Dendritic cell treated with granulocyte-macrophage colony-stimulating factor and Interleukin-4, amounts not matched to agents 40 ng/mL and 50 ng/mL, for 4 days (primary cell): ENCODE measurements at regions of chr1 and their contacts with region 1.

Region 1: DNA sequence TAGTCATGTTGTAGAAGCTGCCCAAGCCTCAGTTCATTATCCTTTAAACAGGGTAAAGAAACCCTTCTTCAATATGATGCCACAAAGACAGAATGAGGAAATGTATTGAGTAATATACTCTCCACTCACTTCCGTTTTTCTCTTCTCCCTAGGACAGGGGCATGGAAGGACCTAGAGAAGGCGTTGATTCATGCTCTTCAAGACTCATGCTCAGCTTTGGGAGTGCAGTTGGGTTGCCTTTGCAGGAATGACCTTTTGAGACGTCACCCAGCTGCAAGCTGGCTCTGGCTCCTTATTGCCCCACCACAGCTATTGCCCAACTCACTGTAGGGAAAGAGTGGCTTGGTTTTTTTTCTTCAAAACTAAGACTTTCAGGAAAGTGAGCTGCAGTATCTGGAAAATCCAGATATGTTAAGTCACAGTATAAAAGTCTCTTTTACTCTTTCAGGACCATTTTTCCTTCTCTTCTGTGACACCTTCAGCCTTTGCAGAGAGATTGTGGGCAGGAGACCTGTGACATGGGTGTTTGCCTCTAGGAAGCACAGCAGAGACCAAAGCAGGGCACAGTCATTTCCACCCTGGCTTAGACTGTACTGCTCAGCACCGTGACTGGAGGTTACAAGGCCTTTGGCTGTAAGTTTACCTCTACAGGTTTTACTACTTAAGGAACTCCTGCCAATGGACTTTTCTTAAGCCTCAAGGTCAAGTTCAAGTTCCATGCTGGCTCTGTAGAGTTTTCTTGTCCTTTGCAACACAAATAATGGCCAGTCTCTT is 39.5 kb downstream of the XCL2 start:
- H3K4me3 Mint-ChIP-seq: no peak overlapping the region
- H3K27ac Mint-ChIP-seq: peak overlapping the region; percentile 53
- H3K4me1 Mint-ChIP-seq: peaks cover 51% of the 10 kb centered on the region
- H3K27me3 Mint-ChIP-seq: no peaks in the 10 kb centered on the region

Region 2: GRCh38 chr1:168408536-168409242 is 95.6 kb before region 1 on chr1:
- intact Hi-C with region 1: no loop called
- H3K4me3 Mint-ChIP-seq: no peak overlapping the region
- H3K27ac Mint-ChIP-seq: no peak overlapping the region
- H3K4me1 Mint-ChIP-seq: no peaks in the 10 kb centered on the region
- H3K27me3 Mint-ChIP-seq: no peaks in the 10 kb centered on the region

Region 3: DNA sequence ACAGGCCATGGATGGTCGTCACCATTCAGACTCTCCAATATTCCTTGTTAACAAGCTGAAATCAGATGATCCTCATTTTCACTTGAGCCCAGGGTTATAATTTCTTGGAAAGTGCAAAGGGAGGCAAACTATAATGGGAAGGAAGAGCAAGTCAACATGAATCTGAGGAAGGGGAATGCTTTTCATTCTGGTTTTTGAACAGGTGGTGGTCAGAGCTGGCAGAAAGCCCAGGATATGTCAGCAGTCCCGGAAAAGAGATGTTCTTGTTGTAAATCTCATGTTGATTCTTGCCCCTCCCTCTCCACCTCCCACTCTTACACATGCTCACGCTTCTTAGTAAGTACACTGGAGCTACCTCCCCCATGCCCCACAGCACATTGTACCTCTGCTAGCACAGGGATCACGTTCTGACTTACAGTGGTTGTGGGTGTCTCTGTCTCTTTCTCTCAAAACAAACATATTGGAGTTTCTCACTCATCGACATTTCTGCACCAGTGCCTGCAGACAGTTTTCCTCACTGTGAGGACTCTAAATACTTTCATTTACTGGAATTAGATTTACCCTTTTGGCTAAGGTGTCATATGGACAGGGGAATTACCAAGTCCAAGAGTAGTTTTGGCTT is 38.0 kb before region 1 on chr1:
- intact Hi-C with region 1: loop called (anchors 5 kb)
- H3K4me3 Mint-ChIP-seq: no peak overlapping the region
- H3K27ac Mint-ChIP-seq: peak overlapping the region; percentile 72
- H3K4me1 Mint-ChIP-seq: peaks cover 34% of the 10 kb centered on the region
- H3K27me3 Mint-ChIP-seq: no peaks in the 10 kb centered on the region

Region 4: DNA sequence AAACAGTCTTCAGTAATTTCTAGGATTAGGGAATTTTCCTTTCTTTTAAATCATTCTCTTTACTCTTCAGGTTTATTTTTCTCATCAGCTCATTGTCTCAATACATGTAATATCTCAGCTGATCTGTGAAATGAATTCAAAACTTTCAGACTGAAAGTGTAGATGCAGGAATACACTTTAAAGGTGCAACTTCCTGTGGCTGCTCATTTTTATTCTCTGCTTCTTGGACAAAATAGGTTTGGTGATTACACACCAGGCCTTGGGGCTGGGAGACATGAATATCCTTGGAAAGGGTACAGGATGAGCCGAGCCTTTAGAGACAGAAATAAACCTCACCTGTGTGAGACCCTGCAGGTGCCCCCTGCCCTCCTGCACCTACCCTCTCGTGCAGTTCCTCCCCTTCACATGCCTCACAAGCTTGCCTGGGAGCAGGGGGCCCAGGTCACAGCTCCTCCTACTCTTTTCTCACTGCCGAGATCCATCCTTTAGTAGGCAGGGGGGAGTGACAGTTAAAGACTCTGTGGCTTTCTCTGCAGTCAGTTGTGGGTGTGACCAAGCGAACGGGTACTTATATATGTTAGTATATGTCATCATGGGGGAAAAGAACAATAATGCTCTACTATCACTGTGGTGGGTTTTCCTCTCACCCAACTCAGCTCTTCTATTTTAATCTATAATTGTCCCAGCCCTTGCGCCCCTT is 16.0 kb after region 1 on chr1:
- intact Hi-C with region 1: no loop called
- H3K4me3 Mint-ChIP-seq: no peak overlapping the region
- H3K27ac Mint-ChIP-seq: peak overlapping the region; percentile 45
- H3K4me1 Mint-ChIP-seq: peaks cover 44% of the 10 kb centered on the region
- H3K27me3 Mint-ChIP-seq: no peaks in the 10 kb centered on the region